WTC11 (cell line): ENCODE measurements at regions of chr3 and their contacts with region 1.

Region 1: DNA sequence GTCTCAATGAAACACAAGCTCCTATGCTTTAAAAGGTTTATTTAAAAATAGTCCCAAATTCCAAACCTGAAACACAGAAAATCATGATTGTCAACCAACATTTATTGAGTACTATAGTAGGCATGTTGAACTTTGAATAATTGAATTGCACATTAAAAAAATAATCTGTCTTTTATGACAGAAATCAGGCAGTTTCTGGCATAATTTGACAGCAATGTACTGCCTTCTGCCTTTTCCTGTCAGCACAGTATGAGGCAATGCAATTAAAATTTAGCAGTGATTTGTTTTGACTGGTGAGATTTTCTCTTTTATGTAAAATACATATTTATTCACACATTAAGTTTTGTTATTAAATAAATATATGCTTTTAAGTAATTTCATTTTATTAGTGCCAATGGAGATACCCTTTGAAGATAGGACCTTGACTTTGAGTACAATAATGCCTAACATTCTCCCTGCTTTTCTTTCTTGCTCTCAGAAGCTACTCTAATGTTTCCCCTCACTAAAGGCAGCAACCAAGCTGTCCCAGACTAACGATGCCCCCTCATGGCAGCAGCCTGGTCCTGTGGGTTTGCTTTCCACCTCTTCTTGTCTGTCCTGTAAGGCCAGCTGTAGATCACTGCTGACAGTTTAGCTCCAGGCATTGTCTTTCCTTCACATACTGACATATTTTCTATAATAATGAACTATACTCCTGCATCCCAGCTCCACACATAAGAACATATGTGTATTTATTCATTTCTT is 346.7 kb downstream of the IL20RB start:
- DNase-seq: peak; percentile 54
- ATAC-seq: peak; percentile 64
- H3K4me3 Mint-ChIP-seq: no peak overlapping the region
- H3K27ac Mint-ChIP-seq: no peak overlapping the region
- H3K4me1 Mint-ChIP-seq: no peaks in the 10 kb centered on the region
- H3K27me3 Mint-ChIP-seq: no peaks in the 10 kb centered on the region
- CTCF ChIP-seq: no peak

Region 2: DNA sequence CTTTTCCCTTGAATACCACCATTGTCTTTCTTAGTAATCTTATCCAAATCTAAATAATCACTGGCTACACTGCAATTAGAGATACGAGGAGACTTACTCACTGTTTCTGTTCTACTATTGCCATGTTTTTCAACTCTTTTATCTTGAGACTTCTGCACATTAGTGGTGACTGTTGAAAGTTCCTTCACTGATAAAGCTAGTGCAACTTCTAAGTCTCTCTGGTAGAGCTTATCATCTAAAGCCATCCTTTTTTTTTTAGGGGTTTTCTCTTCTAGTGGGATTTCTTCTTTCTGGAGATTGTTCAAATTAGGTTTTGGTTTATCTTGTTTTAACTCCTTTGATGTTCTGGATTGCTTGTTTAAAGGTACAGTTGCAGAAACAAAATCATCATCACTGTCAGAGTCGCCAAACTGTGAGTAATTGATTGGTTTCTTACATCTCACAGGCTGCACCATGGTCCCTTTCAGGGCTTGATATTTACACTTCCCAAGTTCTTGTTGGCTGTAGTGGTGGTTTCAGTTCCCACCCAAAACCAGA is 404.8 kb before region 1 on chr3:
- CTCF ChIA-PET with region 1: no interaction called
- POLR2A ChIA-PET with region 1: no interaction called
- DNase-seq: no peak
- ATAC-seq: no peak
- H3K4me3 Mint-ChIP-seq: no peak overlapping the region
- H3K27ac Mint-ChIP-seq: peak overlapping the region; percentile 26; the same call in 1 of the 2 replicates
- H3K4me1 Mint-ChIP-seq: peaks cover 58% of the 10 kb centered on the region
- H3K27me3 Mint-ChIP-seq: no peaks in the 10 kb centered on the region
- CTCF ChIP-seq: no peak

Region 3: GRCh38 chr3:137294139-137294538 is 10.3 kb before region 1 on chr3:
- CTCF ChIA-PET with region 1: interaction called, 19 read pairs
- POLR2A ChIA-PET with region 1: no interaction called
- DNase-seq: no peak
- ATAC-seq: peak; percentile 18
- H3K4me3 Mint-ChIP-seq: no peak overlapping the region
- H3K27ac Mint-ChIP-seq: peak overlapping the region; percentile 30; the same call in 1 of the 2 replicates
- H3K4me1 Mint-ChIP-seq: peaks cover 31% of the 10 kb centered on the region
- H3K27me3 Mint-ChIP-seq: peaks cover 12% of the 10 kb centered on the region; the same call in 1 of the 2 replicates
- CTCF ChIP-seq: no peak